ENCODE measurements at regions of chr6 and their contacts with region 1.

Region 1: GRCh38 chr6:3759646-3760232 is 8.2 kb upstream of the PXDC1 start:
- DNase-seq: no peak

Region 2: GRCh38 chr6:3813150-3813780 is 53.5 kb after region 1 on chr6:
- intact Hi-C with region 1: loop called (anchors 5 kb)
- DNase-seq: peak in 2 of 10 donors; percentile 70 to 73

Region 3: DNA sequence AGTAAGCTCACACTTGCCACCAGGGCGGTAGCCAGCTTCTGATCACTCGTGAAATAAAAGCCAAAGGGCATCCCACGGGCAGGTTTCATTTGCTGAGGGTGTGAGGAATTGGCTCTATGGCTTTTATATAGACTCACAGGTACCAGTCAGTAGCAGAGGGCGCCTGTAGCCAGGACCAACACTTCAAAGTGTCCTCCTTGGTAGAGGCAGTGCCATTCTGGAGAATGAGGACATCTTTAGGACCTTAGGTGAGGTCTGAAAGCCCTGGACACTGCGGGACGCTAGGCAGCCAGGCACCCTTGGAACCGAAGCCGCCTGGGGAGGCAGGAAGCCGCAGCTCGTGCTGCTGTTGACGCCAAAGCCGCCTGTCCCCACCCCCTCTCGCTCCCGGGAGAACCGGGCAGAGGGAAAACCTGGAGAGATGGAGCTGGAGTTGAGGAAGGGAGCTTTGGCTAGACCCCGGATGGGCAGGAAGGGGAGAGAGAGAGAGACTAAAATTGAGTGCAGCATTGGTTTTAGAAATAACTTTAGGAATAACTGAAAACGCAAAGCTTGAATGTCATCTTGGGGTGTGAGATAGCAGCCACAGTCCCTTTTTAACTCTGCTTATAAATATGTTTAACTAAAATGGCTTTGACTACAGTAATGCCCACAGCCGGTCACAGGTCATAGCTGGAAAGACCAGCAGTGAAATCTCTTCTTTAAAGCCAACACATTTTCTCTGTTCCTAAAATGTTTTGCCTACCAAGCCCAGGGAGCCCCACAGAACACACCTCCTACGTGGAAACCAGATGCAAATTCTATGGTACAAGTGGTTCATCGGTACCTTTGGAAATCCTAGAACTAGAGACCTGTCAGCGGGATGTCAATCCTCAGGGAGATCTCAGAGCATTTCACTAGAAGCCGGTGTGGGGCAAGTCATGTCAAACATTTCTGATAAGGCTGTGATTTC is 888.0 kb after region 1 on chr6:
- intact Hi-C with region 1: no loop called
- DNase-seq: peak; percentile 57 to 95 (median 75)